ENCODE measurements at regions of chr5 and their contacts with region 1.

Region 1: GRCh38 chr5:80654391-80655230 is at the starts of genes DHFR and MSH3:
- DNase-seq: peak; percentile 86 to 88
- H3K4me3 ChIP-seq: peak within 1 kb of the TSS; percentile 60 to 100 (median 95)
- H3K27ac ChIP-seq: peak within 1 kb of the TSS; percentile 98
- H3K4me1 ChIP-seq: peaks cover 0 to 5% (median 2%) of the 10 kb centered on the region in 4 experiments; a peak in 3 of 7 replicates
- H3K27me3 ChIP-seq: no peaks in the 10 kb centered on the region
- CTCF ChIP-seq: peak in 1 of 3 experiments; percentile 18; a peak in 1 of 4 replicates
- EP300 ChIP-seq: no peak
- POLR2A ChIP-seq: peak; percentile 82 to 83; a peak in 2 of 3 replicates
- RAD21 ChIP-seq: 0 out of 4 replicates have a peak, but pooled peaks of 1 of the 2 experiments have one; percentile 3
- total RNA-seq, gene DHFR: 86.7 and 88.9 TPM in 2 replicates
- total RNA-seq, gene MSH3: 20.3 and 22.6 TPM in 2 replicates

Region 2: DNA sequence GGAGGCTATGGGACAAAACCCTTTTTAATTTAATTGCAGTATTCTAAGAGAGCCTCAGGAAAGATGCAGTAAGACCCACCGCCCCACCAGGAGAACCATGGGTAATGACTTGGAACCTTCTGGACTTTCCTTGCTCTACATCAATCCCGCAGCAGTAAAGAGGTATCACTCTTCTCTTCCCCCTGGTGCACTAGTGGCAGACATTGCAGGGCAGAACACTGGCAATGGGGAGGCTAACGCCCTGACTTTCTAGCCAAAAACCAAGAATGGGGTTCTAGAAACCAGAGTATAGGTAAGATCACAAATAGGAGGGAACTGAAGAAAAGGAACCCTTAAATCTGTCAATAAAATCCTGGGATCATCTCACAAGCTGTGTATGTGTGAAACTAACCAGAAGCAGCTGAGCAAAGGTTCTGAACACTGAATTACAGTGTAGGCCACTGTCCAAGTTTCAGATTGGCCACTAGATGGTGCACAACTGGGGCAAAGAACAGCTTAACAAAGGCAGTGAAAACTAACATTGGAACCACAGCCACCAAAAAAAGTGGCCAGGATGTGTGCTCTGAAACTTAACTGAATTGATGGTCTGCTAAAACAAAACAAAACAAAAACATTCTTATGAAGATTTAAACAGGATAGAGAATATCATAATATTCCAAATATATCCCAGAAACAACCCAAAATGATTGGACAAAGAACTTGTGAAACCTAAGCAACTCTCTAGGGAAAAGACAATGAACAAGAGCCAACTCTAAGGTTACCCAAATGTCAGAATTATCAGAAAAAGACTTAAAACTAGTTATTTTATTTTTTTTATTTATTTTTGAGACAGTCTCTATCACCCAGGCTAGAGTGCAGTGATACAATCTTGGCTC is 173.4 kb before region 1 on chr5:
- CTCF ChIA-PET with region 1: interaction called, 3 read pairs
- POLR2A ChIA-PET with region 1: interaction called, 11 read pairs
- DNase-seq: peak in 1 of 2 experiments; percentile 17
- H3K4me3 ChIP-seq: no peak overlapping the region
- H3K27ac ChIP-seq: no peak overlapping the region
- H3K4me1 ChIP-seq: peaks cover 0 to 6% (median 0%) of the 10 kb centered on the region in 4 experiments; a peak in 1 of 7 replicates
- H3K27me3 ChIP-seq: no peaks in the 10 kb centered on the region
- CTCF ChIP-seq: peak in 2 of 3 experiments; percentile 71 to 86; a peak in 3 of 4 replicates
- EP300 ChIP-seq: no peak
- POLR2A ChIP-seq: no peak
- RAD21 ChIP-seq: peak; percentile 71 to 82

Region 3: DNA sequence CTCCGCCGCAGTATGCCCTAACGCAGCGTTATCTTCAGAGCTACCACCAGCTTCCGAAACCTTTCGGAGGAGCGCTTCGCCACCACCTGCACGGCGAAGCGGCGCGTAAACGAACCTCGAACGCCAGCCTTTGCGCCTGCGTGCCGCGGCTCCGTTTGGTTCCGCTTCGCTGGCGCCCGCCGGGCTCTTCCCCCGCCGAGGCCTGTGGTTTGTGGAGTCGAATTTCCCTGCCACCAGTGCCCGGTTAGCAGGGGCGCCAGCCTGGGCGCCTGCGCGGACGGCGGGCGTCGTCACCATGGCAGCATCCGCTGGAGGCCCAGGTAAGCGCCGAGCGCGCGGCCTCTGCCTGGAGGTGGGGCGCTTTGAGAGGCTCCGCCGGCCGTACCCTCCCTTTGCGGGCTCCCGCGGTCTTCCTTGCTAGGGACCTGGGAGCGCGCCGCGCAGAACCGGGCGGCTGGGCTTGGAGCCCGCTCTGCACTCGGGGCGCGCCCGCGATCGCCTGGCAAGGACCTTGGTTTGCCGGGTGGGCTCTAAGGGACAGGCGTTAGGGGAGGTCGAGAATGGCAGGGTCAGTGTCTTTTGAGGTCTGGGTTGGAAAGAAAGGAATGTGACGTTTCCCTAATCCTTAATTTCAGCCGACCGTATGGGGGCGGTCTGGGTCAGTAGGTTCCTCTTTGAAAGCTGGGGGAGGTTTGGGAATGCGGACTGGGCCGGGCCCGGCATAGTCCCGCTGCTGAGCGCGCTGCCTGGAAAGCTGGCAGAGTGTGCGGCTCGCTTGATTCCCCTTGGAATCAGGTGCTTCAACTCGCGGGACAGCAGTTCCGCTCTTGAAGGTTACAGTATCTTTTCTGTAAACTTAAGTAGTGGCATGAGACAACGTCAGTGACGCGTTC is 166.5 kb before region 1 on chr5 and contains the start of gene FAM151B:
- CTCF ChIA-PET with region 1: interaction called, 3 read pairs
- POLR2A ChIA-PET with region 1: interaction called, 10 read pairs
- DNase-seq: peak; percentile 94 to 95
- H3K4me3 ChIP-seq: peak within 1 kb of the TSS; percentile 56 to 75 (median 68)
- H3K27ac ChIP-seq: 0 out of 2 replicates have a peak within 1 kb of the TSS, but pooled peaks have one; percentile 9
- H3K4me1 ChIP-seq: peaks cover 0 to 11% (median 6%) of the 10 kb centered on the region in 4 experiments; a peak in 3 of 7 replicates
- H3K27me3 ChIP-seq: no peaks in the 10 kb centered on the region
- CTCF ChIP-seq: peak; percentile 28 to 37 (median 35)
- EP300 ChIP-seq: no peak
- POLR2A ChIP-seq: peak; percentile 52 to 65
- RAD21 ChIP-seq: peak; percentile 63 to 68
- total RNA-seq, gene FAM151B: 0.71 and 1.1 TPM in 2 replicates

Region 4: DNA sequence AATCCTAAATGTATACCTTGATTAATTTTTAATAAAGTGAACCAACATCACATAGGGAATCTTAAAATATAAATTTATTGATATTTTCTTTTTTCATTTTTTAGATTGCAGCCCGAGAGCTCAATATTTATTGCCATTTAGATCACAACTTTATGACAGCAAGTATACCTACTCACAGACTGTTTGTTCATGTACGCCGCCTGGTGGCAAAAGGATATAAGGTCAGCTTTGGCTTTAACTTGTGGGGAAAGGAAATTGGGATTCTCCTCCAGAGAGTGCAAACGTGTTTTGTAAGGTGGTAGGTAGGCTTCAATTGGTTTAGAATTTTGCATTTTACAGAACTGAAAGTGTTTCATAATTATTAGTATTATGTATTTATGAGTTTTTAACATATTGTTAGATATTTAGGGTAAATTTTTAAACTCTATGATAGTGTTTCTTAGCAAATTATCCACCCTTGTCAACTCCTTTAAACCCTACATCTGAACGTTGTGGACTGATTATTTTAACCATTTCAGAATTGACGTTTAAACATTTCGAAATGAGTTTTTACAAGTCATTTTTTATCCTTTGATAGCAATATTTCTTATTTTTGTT is 17.6 kb after region 1 on chr5:
- CTCF ChIA-PET with region 1: interaction called, 28 read pairs
- POLR2A ChIA-PET with region 1: interaction called, 13 read pairs
- DNase-seq: peak in 1 of 2 experiments; percentile 77
- H3K4me3 ChIP-seq: no peak overlapping the region
- H3K27ac ChIP-seq: no peak overlapping the region
- H3K4me1 ChIP-seq: no peaks in the 10 kb centered on the region; a peak in 1 of 7 replicates
- H3K27me3 ChIP-seq: no peaks in the 10 kb centered on the region
- CTCF ChIP-seq: peak in 2 of 3 experiments; percentile 69 to 84; a peak in 3 of 4 replicates
- EP300 ChIP-seq: no peak
- POLR2A ChIP-seq: no peak
- RAD21 ChIP-seq: peak; percentile 69 to 81

Region 5: DNA sequence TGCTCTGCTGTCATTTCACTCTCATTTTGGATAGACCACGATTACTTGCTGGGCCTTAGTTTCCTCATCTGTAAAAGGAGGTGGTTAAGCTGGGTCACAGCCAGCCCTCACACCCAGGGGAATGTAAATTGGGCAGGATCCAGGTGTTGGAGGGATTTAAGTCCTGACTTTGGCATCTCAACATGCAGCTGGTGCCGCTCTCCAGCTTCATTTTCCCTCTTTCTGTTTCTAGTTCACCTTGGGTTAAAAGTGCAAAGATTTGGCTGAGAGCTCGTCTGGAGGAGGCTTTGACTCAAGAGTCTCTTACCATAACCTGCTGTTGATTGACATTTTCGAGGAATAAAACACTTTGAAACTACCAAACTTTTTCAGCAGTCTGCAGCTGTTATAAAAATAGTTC is 144.4 kb after region 1 on chr5:
- CTCF ChIA-PET with region 1: no interaction called
- POLR2A ChIA-PET with region 1: no interaction called
- DNase-seq: no peak
- H3K4me3 ChIP-seq: no peak overlapping the region
- H3K27ac ChIP-seq: no peak overlapping the region
- H3K4me1 ChIP-seq: no peaks in the 10 kb centered on the region
- H3K27me3 ChIP-seq: no peaks in the 10 kb centered on the region
- CTCF ChIP-seq: no peak
- EP300 ChIP-seq: no peak
- POLR2A ChIP-seq: no peak
- RAD21 ChIP-seq: no peak